Activated T-helper 2 cell treated with anti-CD3 and anti-CD28 coated beads, Interferon-gamma antibody, Interleukin-2, Interleukin-4, amounts not matched to agents 10 μg/mL and 5 μg/mL and 100 μg/mL, durations not matched to agents 14 hours and 24 hours and 36 hours (primary cell): ENCODE measurements at regions of chr9 and their contacts with region 1.

Region 1: GRCh38 chr9:123268240-123268949 is at the start of gene STRBP:
- DNase-seq: peak; percentile 89
- H3K4me3 Mint-ChIP-seq: peak within 1 kb of the TSS; percentile 75
- H3K27ac Mint-ChIP-seq: peak within 1 kb of the TSS; percentile 14
- H3K4me1 Mint-ChIP-seq: peaks cover 22% of the 10 kb centered on the region
- H3K27me3 Mint-ChIP-seq: peaks cover 21% of the 10 kb centered on the region
- total RNA-seq, gene STRBP: 19.9 and 20.6 TPM in 2 replicates

Region 2: DNA sequence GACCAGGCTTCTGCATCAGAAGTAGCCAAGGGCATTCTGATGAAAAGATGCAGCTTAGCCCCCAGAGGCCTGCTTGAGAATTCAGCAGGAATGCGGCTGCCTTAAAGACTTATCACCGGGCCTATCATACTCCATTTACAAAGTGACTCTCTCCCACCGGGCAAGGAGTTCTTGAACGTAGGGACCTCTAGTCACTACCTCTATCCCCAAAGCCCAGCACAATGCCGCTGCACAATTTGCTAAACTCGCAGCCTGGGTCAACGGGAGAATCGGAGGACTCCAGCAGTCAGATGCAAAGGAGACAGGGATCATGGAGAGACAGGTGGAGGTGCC is 440.7 kb before region 1 on chr9:
- intact Hi-C with region 1: loop called (anchors 5 kb)
- DNase-seq: no peak
- H3K4me3 Mint-ChIP-seq: peak overlapping the region; percentile 95
- H3K27ac Mint-ChIP-seq: peak overlapping the region; percentile 91
- H3K4me1 Mint-ChIP-seq: peaks cover 19% of the 10 kb centered on the region
- H3K27me3 Mint-ChIP-seq: no peaks in the 10 kb centered on the region

Region 3: GRCh38 chr9:122912964-122913673 is 355.3 kb before region 1 on chr9 and contains the start of gene ZBTB6:
- intact Hi-C with region 1: loop called (anchors 5 kb)
- DNase-seq: peak; percentile 62
- H3K4me3 Mint-ChIP-seq: peak within 1 kb of the TSS; percentile 93
- H3K27ac Mint-ChIP-seq: peak within 1 kb of the TSS; percentile 95
- H3K4me1 Mint-ChIP-seq: peaks cover 24% of the 10 kb centered on the region
- H3K27me3 Mint-ChIP-seq: no peaks in the 10 kb centered on the region
- total RNA-seq, gene ZBTB6: 10.1 and 10.9 TPM in 2 replicates

Region 4: DNA sequence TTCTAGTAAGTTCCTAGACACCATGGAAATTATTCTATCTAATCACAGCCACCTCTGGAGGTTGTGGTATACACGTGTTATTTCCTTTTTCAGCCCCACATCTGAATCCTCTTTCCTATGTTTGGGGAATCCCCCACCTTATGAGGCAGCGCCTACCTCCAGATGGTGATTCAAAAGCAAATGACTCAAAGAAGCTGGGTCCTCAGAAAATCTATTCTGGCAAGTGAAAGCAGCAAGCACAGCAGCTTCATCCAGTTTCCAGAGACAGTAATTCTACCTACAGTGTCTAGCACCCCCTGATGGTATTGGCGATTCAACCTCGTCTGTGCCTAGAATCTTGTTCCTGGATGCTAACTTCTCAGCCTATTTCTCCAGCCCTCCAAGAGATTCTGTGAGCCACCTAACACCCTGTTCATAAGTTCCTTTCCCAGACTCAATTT is 43.0 kb before region 1 on chr9:
- intact Hi-C with region 1: loop called (anchors 5 kb)
- DNase-seq: peak; percentile 27
- H3K4me3 Mint-ChIP-seq: no peak overlapping the region
- H3K27ac Mint-ChIP-seq: peak overlapping the region; percentile 69
- H3K4me1 Mint-ChIP-seq: peaks cover 29% of the 10 kb centered on the region
- H3K27me3 Mint-ChIP-seq: no peaks in the 10 kb centered on the region

Region 5: DNA sequence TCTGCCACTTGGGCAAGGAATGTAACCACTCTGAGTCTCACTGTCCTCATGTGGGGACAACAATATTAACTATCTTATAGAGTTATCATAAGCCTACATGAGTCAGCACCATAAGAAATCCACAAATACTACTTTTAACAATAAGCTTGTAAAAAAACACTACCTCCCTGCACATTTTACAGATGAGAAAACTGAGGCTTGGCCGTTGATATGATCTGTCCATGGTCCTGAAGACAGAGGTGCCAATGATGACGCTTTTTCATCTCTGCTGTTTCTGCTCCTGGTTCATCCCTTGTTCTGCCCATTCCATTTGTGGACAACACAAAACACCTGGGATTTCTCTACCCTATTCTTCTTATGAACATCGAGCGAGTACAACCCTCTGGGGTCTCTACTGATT is 23.3 kb after region 1 on chr9:
- intact Hi-C with region 1: no loop called
- DNase-seq: no peak
- H3K4me3 Mint-ChIP-seq: no peak overlapping the region
- H3K27ac Mint-ChIP-seq: no peak overlapping the region
- H3K4me1 Mint-ChIP-seq: no peaks in the 10 kb centered on the region
- H3K27me3 Mint-ChIP-seq: peaks cover 5% of the 10 kb centered on the region